GM10248 (cell line): ENCODE measurements at regions of chr5 and their contacts with region 1.

Region 1: DNA sequence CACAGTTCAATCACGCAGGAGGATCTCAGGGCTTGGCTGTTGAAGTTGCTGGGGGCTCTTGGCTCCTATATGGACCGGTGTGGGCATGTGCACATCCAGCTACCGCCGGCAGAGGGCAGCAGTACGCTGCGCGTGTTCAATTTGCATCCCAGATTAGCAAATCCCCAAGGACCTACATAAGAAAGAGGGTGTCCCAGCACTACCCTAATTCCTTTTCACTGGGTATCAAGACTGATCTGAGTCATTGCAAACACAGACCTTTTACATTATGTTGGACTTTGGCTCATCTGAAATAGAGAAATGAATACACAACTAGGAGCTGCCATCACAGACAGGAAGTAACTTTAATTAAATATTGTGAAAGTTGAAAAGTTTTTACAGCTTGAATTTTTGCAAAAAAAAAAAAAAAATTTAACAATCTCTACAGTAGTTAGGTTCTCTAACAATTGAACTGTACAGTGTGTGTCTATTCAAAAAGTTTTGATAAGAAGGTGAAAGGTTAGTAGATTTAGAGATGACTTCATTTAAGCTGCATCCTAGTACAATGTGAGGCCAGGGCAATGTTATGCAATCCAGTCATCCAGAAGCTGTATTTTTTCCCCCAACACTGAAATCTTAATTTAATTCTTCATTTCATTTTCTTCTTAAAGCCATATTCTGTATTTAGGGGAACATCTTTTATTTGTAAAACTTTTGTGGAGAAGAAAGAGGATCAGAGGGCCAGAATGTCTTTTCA is 404.0 kb downstream of the EBF1 start:
- DNase-seq: peak; percentile 72
- CTCF ChIP-seq: peak; percentile 97

Region 2: DNA sequence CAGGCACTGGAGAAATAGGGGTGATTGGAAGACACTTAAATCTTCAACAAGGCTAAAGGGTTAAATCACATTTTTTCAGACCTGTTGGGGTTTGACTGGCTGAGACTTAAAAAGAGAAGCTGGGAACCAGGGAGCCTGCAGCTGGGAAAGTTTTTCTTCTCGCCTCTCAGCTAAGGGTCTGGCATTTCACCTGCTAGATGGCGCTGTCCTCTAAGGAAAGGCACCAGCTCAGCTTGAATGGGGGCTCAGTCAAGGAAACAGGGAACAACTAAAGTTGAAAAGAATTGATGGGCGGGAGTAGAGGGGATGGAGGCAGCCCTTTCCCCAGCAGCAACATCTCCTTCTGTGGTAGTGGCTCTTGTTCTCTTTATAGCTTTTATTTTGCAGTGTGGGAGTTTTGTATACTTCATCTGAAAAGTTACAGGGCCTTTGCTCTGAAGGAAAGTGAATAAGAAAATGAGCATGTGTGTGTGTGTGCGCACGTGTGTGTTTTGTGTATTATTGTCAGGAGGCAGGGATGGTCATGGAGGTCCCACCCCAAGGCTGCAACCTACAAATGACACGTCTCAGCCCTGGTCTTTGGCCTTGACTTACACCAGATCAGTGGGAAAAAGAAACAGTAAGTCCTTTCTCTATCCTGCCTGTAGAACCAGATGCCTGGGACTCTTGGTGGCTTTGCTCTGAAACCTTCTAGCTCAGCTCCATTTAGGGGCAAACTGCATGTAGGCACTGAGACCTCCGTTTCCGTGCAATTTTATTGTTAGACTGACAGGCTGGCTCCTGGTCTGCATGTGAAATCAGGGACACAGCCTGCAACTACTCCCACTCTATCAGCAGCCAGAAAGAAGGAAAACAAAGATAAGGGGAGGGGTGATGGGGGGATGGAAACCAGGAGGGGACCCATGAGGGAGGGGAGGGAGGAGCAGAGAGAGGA is 520.6 kb before region 1 on chr5:
- CTCF ChIA-PET with region 1: interaction called, 26 read pairs
- POLR2A ChIA-PET with region 1: no interaction called
- DNase-seq: peak; percentile 75
- CTCF ChIP-seq: peak; percentile 89

Region 3: DNA sequence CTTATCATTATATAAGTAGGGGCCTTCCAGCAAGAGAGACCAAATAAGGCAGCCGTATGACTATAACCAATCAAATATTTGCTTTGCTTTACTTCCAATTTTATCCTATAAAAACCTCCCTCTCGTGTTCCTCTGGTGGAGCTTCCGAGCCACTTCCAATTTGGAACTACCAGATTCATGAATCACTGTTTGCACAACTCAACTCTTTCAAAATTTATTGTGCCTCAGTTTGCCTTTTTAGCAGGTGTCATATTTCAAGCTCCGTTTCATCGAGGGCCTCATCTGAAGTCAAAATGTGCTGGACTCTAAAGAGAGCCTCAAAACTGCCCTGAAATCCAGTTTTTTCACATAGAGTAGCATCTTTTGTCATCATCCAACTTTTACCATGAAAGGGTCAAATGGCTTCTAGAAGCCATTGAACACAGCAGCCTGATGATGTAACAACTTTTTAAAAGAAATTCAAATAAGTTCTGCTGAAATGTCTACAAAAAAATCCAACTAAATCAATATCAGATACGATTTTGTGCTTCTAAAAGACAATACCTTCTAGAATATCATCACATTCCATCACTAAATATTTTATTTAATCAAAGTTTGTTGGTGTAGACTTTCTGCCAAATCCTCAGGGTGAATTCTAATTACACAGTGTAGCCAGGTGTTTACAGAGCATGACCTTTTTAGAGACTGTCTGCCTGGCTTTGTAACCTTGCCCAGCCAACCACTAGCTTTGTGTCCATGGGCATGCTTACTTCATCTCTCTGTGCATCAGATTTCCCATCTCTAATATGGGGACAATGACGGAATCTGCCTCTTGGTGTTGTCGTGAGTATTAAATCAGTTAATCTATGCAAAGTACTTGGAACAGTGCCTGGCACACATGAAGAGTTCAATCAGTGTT is 101.1 kb before region 1 on chr5:
- CTCF ChIA-PET with region 1: no interaction called
- POLR2A ChIA-PET with region 1: no interaction called
- DNase-seq: no peak
- CTCF ChIP-seq: no peak

Region 4: DNA sequence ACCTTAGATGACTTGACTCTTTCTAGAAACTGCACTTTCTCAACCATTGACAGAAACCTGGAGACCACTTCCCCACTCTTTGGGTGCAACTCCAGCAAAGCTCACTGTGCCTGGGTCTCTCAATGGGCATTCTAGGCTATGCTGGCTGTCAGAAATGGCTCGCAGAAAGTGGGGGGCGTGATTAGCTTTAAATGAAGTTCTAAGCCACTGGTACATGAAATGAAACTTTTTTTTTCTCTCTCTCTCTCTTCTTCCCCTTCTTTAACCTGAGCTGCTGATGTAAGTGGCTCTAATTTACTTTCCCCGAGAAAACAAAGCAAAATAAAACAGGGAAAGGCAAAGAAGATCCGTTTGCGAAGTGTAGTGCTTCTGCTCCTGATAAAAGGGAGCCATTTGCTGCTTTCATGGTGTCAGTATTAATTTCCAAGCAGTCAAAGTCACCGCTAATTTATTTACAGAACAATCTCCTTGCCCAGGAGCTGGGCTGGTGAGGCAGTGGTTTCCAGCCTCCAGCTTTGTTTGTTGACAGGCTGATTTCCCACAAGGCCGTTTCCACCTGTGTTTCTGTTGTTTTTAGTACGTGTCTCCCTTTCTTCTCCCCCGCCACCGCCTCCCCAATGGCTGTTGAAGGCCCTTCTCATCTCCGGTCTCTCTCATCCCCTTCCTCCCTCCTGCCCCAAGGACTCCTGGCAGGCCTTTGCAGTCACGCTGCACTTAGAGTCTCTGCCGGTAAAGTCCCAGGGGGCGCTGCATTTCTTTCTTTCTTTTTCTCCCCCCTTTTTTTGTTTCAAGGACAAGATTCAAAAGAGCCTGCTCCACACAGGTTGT is 18.9 kb before region 1 on chr5:
- CTCF ChIA-PET with region 1: interaction called, 35 read pairs
- POLR2A ChIA-PET with region 1: no interaction called
- DNase-seq: no peak
- CTCF ChIP-seq: peak; percentile 20

Region 5: DNA sequence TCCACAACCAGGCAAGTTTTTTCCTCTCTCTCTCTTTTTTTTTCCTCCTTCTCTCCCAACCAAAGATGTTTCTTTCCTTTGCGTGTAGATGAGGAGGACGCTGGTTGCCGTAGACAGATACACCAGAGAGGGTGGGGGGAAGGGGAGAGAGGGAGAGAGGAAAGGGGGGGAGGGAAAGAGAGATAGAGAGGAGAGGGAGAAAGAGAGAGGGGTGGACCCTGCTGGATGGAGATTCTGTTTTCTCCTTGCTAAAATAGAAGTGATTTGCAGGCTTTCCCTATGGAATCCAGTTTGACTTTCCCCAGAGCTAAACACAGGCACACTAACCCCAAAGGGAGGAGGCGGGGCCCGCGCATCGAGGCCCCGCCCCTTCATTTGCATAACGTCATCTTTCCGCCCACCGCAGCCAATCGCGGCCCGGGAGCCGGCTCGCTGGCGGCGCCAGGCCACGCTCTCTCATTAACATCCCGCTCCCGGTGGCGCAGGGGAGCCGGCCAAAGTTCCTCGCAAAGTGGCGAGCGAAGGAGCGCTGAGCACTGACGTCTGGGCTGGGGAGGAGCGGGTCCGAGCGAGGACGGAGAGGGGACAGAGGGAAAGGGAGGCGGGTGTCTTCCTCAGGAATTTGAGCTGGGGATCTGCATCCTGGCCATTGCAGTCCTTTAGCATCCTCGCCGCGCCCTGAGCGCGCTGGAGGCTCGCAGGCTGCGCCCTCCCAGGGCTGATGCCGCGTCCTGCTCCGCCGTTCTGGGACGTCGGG is 404.4 kb after region 1 on chr5:
- CTCF ChIA-PET with region 1: interaction called, 255 read pairs
- POLR2A ChIA-PET with region 1: interaction called, 3 read pairs
- DNase-seq: peak; percentile 87
- CTCF ChIP-seq: no peak